Activated CD8-positive, alpha-beta T cell treated with anti-CD3 and anti-CD28 coated beads for 36 hours (primary cell): ENCODE measurements at regions of chr18 and their contacts with region 1.

Region 1: DNA sequence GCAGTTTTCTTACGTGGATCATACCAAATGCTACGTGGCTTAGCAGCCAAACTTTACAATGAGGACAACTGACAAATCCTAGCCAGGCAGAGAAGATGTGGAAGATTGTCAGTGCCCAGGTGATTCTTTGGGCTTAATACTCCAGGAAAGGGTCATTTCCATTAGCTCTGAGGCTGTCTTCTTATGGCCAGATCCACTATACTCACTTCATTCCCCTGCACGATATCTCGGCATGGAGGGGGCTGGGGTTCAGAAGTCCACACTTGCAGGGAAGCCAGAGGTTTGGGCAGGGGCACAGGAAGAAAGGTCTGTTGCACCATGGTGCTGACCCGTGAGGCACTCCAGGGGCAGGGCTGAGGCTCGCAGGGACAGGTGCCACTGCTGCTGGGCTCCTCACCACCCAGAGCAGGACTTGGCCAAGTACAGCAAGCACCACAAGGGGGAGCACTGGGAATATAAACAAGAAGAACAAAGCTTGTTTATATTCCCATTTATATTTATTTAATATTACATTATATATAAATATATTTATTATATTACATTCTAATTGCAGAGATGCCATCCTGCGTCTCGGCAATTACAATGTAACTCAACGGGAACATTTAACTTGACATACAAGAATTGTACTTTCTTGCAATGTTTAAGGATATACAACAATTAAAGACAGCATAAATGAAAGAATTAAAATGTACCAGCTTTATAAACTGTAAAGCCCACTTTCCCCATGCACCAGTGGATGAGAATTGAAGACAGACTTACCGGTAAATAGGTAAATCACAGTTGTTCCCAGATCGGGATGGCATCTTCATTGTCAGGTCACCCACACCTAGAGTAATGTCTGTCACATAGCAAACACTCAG is 27.2 kb downstream of the CLUL1 start:
- DNase-seq: peak; percentile 85
- ATAC-seq: peak; percentile 95
- H3K4me3 Mint-ChIP-seq: no peak overlapping the region
- H3K27ac Mint-ChIP-seq: no peak overlapping the region
- H3K4me1 Mint-ChIP-seq: no peaks in the 10 kb centered on the region
- H3K27me3 Mint-ChIP-seq: peaks cover 2% of the 10 kb centered on the region
- CTCF ChIP-seq: peak; percentile 95

Region 2: DNA sequence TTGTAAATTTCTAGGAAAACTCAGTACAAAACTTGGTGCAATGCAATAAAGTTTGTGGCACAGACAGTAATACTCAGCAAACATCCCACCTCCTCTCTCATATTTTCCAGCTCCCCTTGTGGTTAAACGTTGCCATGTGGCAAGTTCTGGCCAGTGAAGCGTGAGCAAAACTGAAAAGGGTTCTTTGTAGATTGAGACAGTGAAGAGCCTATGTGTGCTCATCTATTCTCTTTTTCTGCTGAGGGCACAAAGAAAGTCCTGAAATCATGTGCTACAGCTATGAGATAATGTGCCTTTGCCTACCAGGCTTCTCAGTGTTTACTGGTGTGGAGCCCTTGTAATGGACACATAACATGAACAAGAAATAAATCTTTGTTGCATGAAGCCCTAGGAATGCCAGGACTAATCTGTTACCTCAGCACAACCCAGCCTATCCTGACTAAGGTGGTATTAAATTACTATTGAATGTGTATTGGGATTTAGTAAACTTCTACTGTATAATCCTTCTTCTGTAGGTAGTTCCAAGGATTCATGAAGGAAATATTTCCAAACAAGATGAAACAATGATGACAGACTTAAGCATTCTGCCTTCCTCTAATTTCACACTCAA is 20.5 kb after region 1 on chr18:
- CTCF ChIA-PET with region 1: interaction called, 29 read pairs
- POLR2A ChIA-PET with region 1: no interaction called
- intact Hi-C with region 1: no loop called
- DNase-seq: peak; percentile 61
- ATAC-seq: peak; percentile 93
- H3K4me3 Mint-ChIP-seq: no peak overlapping the region
- H3K27ac Mint-ChIP-seq: no peak overlapping the region
- H3K4me1 Mint-ChIP-seq: peaks cover 7% of the 10 kb centered on the region
- H3K27me3 Mint-ChIP-seq: peaks cover 9% of the 10 kb centered on the region
- CTCF ChIP-seq: no peak

Region 3: DNA sequence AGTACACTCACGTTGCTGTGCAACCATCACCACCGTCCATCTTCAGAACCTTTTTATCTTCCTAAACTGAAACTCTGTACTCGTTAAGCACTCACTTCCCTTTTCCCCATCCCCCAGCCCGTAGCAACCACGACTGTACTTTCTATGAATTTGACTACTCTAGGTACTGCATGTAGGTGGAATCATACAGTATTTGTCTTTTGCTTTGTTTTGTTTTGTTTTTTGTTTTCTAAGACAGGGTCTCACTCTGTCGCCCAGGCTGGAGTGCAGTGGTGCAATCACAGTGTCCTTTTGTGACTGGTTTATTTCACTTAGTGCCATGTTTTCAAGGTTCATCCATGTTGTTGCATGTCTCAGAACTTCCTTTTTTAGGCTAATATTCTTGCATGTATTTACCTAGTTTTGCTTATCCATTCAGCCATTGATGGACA is 26.5 kb after region 1 on chr18:
- CTCF ChIA-PET with region 1: interaction called, 29 read pairs
- POLR2A ChIA-PET with region 1: no interaction called
- intact Hi-C with region 1: no loop called
- DNase-seq: peak; percentile 74
- ATAC-seq: peak; percentile 93
- H3K4me3 Mint-ChIP-seq: no peak overlapping the region
- H3K27ac Mint-ChIP-seq: peak overlapping the region; percentile 8
- H3K4me1 Mint-ChIP-seq: peaks cover 7% of the 10 kb centered on the region
- H3K27me3 Mint-ChIP-seq: peaks cover 26% of the 10 kb centered on the region
- CTCF ChIP-seq: no peak